ENCODE measurements at regions of chr6 and their contacts with region 1.

Region 1: DNA sequence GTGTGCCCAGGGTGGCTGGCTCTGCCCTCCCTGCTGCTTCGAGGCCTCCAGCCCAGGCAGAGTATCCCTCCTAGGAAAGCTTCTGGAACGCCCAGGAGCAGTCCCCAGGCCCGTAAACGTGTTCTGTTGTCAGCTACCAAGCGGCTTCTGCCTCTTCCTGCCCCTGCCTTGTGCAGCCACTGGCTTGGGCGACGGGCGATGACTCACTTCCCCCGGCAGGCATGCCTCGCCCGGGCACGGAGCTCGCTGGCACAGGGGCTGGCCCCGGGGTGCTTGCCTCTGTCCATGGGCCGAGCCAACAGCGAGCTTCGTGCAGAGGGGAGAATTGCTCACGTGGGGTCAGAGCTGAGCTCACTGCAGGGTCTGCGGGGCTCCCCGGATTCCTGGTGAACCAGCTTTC is 86.7 kb upstream of the THBS2 start:
- DNase-seq: peak; percentile 79
- H3K4me3 ChIP-seq: no peak overlapping the region
- H3K27ac ChIP-seq: peak overlapping the region; percentile 66
- H3K4me1 ChIP-seq: peaks cover 58% of the 10 kb centered on the region
- H3K27me3 ChIP-seq: no peaks in the 10 kb centered on the region
- CTCF ChIP-seq: no peak

Region 2: DNA sequence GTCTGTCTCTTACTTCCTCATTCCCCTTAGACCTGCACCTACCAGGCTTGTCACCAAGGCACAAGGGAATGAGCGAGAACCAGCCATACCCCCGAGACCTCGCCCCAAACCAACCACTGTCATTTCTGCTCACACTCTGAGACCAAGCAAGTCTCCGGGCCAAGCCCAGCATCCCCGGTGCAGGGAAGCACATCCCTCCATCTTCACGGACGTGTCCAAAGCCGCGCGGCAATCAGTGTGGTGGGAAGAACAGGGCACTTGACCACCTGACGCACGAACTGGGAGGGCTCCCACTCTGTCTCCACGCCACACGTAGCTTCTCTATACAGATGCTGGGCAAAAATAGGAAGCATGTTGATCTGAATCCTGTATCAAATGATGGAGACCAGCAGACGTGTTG is 58.4 kb before region 1 on chr6:
- CTCF ChIA-PET with region 1: no interaction called
- dilution Hi-C with region 1: loop called (anchors 5 kb)
- in situ Hi-C with region 1: no loop called
- intact Hi-C with region 1: no loop called
- DNase-seq: no peak
- H3K4me3 ChIP-seq: no peak overlapping the region
- H3K27ac ChIP-seq: no peak overlapping the region
- H3K4me1 ChIP-seq: no peaks in the 10 kb centered on the region
- H3K27me3 ChIP-seq: no peaks in the 10 kb centered on the region
- CTCF ChIP-seq: no peak

Region 3: DNA sequence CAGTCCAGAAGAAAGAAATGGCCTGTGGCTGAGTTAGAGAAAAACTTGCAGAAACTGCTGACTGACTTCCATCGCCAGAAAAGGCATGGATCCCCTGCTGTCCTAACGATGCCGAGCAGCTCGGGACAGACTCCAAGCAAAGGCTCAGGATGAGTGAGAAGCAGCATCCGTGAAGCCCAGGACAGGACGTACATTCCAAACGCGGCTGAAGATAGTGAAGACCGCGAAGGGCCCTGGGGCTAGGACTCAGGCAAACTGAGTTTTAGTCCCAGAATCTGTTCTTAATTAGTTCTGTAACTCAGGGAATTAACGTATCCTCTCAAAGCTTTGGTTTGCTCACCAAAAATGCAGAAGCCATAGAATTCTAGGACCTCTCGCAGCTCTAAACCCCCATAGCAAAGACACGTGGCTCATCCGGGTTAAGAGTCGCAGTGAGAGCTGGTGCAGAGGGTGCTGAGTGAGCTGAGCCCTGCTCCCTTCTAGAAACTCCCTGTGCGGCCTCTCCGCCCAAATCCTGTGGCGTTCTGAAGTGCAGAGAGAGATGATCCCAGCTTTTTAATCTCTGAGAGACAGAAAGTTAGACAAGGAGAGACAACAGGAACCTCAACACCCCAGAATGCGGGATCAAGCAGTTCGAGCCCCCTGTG is 46.1 kb after region 1 on chr6:
- CTCF ChIA-PET with region 1: no interaction called
- dilution Hi-C with region 1: loop called (anchors 5 kb)
- in situ Hi-C with region 1: no loop called
- intact Hi-C with region 1: no loop called
- DNase-seq: no peak
- H3K4me3 ChIP-seq: no peak overlapping the region
- H3K27ac ChIP-seq: no peak overlapping the region
- H3K4me1 ChIP-seq: no peaks in the 10 kb centered on the region
- H3K27me3 ChIP-seq: no peaks in the 10 kb centered on the region
- CTCF ChIP-seq: no peak

Measured in mammary epithelial cell (primary cell).